Mucosa of descending colon (tissue), 3 donors: ENCODE measurements at regions of chr14 and their contacts with region 1.

Region 1: GRCh38 chr14:60753264-60754119 is 18.9 kb downstream of the MNAT1 start:
- DNase-seq: peak in 1 of 3 donors; percentile 17
- ATAC-seq: peak; percentile 85
- H3K4me3 ChIP-seq: no peak overlapping the region
- H3K4me1 ChIP-seq: no peaks in the 10 kb centered on the region
- CTCF ChIP-seq: no peak

Region 2: GRCh38 chr14:60815371-60815770 is 61.9 kb after region 1 on chr14:
- intact Hi-C with region 1: no loop called
- DNase-seq: no peak
- ATAC-seq: no peak
- H3K4me3 ChIP-seq: no peak overlapping the region
- H3K4me1 ChIP-seq: no peaks in the 10 kb centered on the region
- CTCF ChIP-seq: no peak

Region 3: DNA sequence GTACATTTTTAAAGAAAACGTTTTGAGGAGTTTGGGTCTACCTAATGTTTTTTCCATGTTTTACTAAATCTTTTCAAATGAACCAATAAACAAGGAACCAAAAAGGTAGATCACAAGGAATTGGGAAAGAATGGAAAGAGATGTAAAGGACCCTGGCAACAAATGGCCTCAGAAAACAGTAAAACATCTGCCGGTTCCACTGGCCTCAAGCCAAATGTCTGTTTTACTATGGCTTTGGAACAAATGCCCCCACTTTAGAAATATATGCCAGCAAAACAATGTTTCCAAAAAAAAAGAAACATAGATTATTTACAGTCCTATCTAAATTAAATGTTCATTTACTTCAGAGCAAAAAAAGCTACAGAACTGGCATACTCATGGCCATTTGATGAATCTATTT is 224.4 kb after region 1 on chr14:
- intact Hi-C with region 1: loop called in 1 of 2 experiments (anchors 5 kb)
- DNase-seq: no peak
- ATAC-seq: no peak
- H3K4me3 ChIP-seq: no peak overlapping the region
- H3K4me1 ChIP-seq: peaks cover 15% of the 10 kb centered on the region
- CTCF ChIP-seq: no peak

Region 4: GRCh38 chr14:61103481-61104339 is 350.2 kb after region 1 on chr14:
- intact Hi-C with region 1: no loop called
- DNase-seq: peak in 1 of 3 donors; percentile 15
- ATAC-seq: peak; percentile 77
- H3K4me3 ChIP-seq: no peak overlapping the region
- H3K4me1 ChIP-seq: no peaks in the 10 kb centered on the region
- CTCF ChIP-seq: no peak